Activated T-helper 1 cell treated with anti-CD3 and anti-CD28 coated beads, Interleukin-12 subunit alpha, Interleukin-12 subunit beta, Interleukin-2, Interleukin-4 antibody, amounts not matched to agents 30 ng/mL and 10 ng/mL and 1 ng/mL, durations not matched to agents 14 hours and 24 hours and 36 hours (primary cell): ENCODE measurements at regions of chr17 and their contacts with region 1.

Region 1: DNA sequence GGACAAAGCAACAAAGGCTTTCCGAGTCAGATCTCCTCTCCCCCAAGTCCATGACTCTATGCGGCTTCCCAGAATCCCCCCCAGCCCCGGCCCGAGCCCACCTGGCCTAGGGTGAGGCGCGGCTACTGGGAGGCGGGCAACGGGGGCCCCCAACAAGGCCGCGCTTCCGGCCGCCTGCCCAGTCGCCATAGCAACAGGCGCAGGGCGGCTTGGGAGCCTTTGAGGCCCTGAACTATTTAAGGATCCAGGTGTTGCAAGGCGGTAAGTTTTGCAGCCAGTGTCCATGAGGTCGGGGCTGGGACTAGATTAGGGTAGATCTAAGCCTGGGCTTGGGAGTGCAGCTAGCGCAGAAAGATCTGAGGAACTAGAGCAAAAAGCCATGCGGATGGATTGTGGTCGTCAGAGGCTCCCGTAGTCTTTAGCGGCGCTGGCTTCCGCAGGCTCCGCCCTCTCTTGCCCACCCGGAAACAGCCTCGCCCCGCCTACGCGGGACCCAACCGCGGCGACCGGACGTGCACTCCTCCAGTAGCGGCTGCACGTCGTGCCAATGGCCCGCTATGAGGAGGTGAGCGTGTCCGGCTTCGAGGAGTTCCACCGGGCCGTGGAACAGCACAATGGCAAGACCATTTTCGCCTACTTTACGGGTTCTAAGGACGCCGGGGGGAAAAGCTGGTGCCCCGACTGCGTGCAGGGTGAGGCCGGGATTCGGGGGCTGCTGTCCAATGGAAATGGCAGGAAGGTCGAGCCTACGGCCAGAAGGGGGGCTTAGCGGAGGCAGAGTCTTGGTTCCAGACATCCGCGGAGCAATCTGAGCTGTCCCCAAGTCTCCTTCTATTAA is at the starts of genes KIAA0753 and TXNDC17:
- DNase-seq: peak; percentile 94
- H3K4me3 Mint-ChIP-seq: peak within 1 kb of the TSS; percentile 97
- H3K27ac Mint-ChIP-seq: peak within 1 kb of the TSS; percentile 99
- H3K4me1 Mint-ChIP-seq: peaks cover 60% of the 10 kb centered on the region
- H3K27me3 Mint-ChIP-seq: no peaks in the 10 kb centered on the region
- total RNA-seq, gene KIAA0753: 18.2 and 22.2 TPM in 2 replicates
- total RNA-seq, gene TXNDC17: 94.0 and 95.2 TPM in 2 replicates

Region 2: DNA sequence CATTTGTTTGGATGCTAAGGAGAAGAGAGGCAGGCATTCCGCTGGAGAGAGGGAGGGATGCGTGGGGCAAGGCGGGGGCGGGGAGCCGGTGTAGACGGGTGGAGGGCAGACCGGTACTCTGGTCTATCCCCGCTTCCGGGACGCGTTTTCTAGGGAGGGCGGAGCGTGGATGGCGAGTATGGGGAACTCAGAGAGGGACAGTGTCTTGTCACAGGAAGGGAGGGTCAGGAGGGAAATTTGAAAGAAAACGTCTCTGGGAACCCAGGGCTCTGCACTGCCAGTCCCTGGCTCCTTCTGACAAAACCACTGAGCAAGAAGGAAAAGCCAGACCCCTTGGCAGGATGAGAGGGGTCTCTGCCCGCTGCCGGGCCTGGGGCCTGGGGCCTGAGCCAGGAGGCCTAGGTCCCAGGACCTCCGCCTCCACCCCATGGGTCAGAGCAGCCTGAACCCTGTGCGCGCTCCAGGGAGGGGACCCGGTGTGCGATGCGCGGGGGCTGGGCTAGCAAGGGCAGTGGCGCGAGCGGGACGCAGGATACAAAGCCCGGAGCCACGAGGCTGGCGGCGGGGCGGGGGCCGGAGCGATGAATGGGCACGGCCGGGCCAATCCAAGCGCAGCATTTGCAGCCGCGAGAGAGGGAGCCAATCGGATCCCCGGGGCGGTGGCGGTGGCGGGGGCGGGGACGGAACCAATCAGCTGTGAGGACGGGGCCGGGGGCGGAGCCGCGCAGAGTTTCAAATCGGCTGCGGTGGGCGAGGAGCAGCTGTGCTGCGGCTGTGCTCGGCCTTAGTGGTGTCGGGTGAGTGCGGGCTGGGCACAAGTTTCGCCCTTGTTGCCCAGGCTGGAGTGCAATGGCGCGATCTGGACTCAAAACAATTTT is 196.8 kb before region 1 on chr17 and contains the start of gene PIMREG:
- intact Hi-C with region 1: loop called (anchors 10 kb)
- DNase-seq: peak; percentile 91
- H3K4me3 Mint-ChIP-seq: peak within 1 kb of the TSS; percentile 95
- H3K27ac Mint-ChIP-seq: peak within 1 kb of the TSS; percentile 97
- H3K4me1 Mint-ChIP-seq: peaks cover 14% of the 10 kb centered on the region
- H3K27me3 Mint-ChIP-seq: peaks cover 32% of the 10 kb centered on the region
- total RNA-seq, gene PIMREG: 6.8 and 8.0 TPM in 2 replicates

Region 3: GRCh38 chr17:6473128-6473767 is 167.5 kb before region 1 on chr17:
- intact Hi-C with region 1: loop called (anchors 2 kb)
- DNase-seq: peak; percentile 57
- H3K4me3 Mint-ChIP-seq: no peak overlapping the region
- H3K27ac Mint-ChIP-seq: no peak overlapping the region
- H3K4me1 Mint-ChIP-seq: no peaks in the 10 kb centered on the region
- H3K27me3 Mint-ChIP-seq: no peaks in the 10 kb centered on the region

Region 4: GRCh38 chr17:6555331-6556120 is 85.2 kb before region 1 on chr17:
- intact Hi-C with region 1: loop called (anchors 5 kb)
- DNase-seq: no peak
- H3K4me3 Mint-ChIP-seq: peak overlapping the region; percentile 64
- H3K27ac Mint-ChIP-seq: no peak overlapping the region
- H3K4me1 Mint-ChIP-seq: peaks cover 5% of the 10 kb centered on the region
- H3K27me3 Mint-ChIP-seq: peaks cover 54% of the 10 kb centered on the region

Region 5: DNA sequence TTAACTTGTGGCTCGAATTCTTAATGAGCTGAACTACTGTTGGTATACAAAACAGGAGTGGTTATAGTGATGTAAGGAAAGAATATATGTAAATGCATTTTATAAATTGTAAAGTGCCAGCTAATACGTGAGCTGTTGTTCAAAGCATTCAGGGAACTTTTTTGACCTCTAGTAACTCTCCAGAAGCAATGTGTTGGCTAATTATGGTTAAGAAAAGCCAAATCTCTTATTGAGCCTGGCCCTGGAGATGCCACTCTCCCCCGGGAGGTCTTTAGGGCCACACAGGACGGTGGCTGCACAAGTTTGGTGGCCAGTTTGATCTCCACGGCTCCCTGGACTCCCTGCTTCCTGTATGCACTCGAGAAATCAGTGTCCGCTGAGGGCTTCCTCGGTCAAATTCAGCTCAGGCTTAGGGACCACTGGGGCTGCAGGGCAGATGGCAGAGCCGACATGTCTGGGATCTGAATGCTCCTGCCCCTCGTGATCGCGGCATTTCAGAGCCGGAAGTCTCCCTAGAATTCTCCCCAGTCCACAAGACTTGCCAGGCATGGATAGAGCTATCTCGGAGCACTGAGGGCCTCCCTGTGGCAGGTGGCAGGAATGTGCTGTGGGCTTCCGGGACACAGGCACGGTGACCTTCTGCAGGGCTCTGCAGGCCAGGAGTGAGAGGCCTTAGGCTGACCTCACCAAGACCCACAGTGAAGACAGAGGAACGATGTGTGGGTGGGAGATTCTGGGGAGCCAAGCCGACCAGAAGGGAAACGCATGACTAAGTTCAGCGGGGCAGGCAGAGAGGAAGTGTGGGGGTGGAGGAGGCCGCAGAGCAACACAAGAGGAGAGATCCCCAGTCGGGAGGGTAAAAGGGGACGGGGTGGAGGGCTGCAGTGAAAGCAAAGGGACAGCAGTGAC is 65.8 kb before region 1 on chr17:
- intact Hi-C with region 1: loop called (anchors 2 kb)
- DNase-seq: peak; percentile 16
- H3K4me3 Mint-ChIP-seq: peak overlapping the region; percentile 66
- H3K27ac Mint-ChIP-seq: peak overlapping the region; percentile 79
- H3K4me1 Mint-ChIP-seq: peaks cover 36% of the 10 kb centered on the region
- H3K27me3 Mint-ChIP-seq: no peaks in the 10 kb centered on the region

Region 6: DNA sequence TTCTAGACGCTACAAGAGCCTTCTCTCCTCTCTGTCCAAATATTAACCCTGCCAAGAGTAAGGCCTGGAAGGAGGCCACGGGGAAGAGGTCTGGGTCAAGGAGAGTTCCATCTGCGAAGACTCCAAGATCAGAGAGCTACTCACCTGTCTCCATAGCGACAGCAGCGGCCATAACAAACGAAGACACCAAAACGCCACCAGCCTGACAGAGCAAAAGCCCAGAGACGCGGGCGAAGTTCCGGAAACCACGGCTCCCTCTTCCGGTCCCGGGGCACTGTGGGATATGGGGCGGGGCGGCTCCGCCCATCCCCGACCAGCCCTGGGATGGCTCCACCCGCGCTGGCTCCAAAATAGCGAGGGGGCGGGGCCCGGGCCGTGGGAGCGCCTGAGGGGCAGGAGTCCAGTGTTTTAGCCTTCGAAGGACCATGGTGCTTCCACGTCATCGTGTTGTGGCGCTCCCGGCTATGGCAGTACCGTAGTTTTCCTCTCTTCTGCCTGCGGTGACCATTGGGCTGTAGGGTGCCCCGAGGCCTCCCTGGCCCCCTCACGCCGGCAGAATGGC is 10.7 kb after region 1 on chr17 and contains the starts of genes C17orf100 and MED31:
- intact Hi-C with region 1: loop called (anchors 1 kb)
- DNase-seq: peak; percentile 95
- H3K4me3 Mint-ChIP-seq: peak within 1 kb of the TSS; percentile 100
- H3K27ac Mint-ChIP-seq: peak within 1 kb of the TSS; percentile 100
- H3K4me1 Mint-ChIP-seq: peaks cover 69% of the 10 kb centered on the region
- H3K27me3 Mint-ChIP-seq: peaks cover 17% of the 10 kb centered on the region
- total RNA-seq, gene C17orf100: 1.6 and 1.7 TPM in 2 replicates
- total RNA-seq, gene MED31: 24.3 and 28.4 TPM in 2 replicates

Region 7: DNA sequence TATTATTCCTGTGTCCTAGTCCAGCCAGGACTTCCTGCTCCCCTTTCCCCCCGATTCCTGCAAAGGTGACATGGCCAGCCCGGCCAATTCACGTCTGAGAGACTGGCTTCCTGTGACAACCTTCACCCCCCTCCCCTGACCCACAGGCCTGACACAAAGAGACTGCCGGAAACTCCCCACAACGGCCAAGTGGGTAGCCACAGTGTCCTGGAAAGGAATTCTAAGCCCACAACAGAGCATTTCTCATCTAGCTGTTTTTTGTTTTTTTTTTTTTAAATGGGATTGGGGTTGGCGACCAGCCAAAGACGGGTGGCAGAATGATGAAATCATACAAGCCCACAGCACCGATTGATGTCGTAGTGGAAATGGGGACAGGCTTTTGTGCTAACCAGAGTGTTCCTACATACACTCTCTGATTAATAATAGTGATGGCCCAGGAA is 112.3 kb after region 1 on chr17:
- intact Hi-C with region 1: loop called (anchors 5 kb)
- DNase-seq: no peak
- H3K4me3 Mint-ChIP-seq: no peak overlapping the region
- H3K27ac Mint-ChIP-seq: peak overlapping the region; percentile 64
- H3K4me1 Mint-ChIP-seq: peaks cover 52% of the 10 kb centered on the region
- H3K27me3 Mint-ChIP-seq: peaks cover 4% of the 10 kb centered on the region